ENCODE measurements at regions of chr18 and their contacts with region 1.

Region 1: DNA sequence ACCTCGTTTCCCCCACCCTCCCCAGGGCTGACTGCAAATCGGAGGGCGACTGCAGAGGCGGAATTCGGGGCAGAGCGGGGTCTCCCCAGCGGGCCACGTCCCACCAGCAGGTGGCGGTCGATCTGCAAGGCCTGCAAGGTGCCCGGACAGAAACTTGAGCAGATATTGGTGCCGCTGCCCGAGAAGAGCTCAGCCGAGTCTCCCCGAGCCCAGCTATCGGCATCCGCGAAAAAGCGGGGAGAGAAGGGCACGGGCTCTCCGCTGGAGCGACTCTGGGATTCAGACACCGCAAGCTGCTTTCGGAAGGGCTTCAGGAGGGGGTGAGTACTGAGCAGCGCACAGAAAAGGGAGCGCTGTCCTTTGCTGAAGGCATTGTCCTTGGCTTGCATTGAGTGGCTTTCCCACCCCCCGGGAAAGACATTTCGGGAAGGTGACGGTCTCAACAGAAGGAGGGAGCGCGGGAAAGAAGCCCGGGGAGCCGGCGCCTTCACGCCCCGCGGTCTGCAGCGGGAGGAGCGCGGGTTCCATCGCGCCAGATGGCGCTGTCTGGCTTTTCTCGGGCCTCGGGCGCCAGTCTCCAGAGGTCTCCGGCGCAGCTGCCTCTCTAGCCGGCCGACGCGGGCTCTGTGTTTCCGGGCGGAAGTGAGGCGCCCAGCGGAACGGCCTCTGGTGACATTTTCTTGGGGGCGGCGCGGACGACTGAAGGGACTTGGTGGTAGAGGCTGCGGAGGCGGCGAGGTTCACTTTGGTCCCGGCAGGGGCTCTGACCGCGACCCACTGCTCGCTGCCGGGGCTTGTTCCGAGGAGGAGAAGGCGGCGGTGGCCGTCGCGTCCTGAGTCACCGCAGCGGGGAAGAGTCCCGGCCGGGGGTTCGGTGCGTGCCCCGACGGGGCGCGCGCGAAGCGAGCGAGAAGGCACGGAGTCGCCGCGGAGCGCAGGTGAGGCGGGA is 69.5 kb downstream of the HAUS1 start:
- DNase-seq: peak; percentile 92
- H3K4me3 Mint-ChIP-seq: peak overlapping the region; percentile 84
- H3K27ac Mint-ChIP-seq: peak overlapping the region; percentile 94
- H3K4me1 Mint-ChIP-seq: peaks cover 6% of the 10 kb centered on the region
- H3K27me3 Mint-ChIP-seq: no peaks in the 10 kb centered on the region
- CTCF ChIP-seq: peak; percentile 89

Region 2: DNA sequence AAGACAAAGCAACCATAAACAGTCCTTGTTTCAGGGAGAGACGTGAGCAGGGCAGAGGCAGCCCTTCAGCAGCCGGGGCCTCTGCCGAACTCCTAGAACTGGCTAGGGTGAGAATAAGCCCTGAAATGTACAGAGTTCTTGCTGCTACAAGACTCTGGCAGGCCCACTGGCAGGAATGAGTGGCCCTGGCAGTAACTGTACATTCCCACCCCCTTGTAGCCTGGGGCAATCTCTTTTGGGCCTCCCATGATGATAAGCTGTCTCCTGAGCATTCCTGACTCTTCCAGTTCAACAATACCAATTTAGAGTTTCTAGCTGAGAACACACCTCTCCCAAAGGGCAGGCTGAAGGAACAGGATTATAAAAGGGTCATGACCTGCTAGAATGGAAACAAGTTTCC is 15.2 kb before region 1 on chr18:
- CTCF ChIA-PET with region 1: interaction called, 94 read pairs
- POLR2A ChIA-PET with region 1: interaction called, 12 read pairs
- intact Hi-C with region 1: loop called (anchors 2 kb)
- DNase-seq: peak; percentile 61
- H3K4me3 Mint-ChIP-seq: no peak overlapping the region
- H3K27ac Mint-ChIP-seq: no peak overlapping the region
- H3K4me1 Mint-ChIP-seq: peaks cover 15% of the 10 kb centered on the region
- H3K27me3 Mint-ChIP-seq: no peaks in the 10 kb centered on the region
- CTCF ChIP-seq: no peak

Region 3: DNA sequence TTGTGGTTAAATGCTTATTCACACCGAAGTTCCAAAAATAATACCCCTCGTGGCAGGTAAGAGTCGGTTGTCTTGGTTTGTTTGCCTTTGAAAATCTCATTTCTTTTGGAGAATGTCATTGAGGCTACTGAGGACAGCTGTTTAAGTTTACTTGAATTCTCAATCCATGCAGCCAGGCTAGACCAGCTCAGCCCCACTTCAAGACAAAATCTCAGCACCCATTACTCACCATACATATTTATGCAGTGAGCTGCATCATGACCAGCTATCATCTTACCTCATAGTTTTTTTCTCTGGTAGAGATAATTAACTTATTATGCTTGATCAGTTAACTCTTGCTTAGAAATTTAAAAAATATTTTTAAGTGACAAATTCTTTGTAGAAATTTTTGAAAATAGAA is 46.4 kb after region 1 on chr18:
- CTCF ChIA-PET with region 1: interaction called, 17 read pairs
- POLR2A ChIA-PET with region 1: interaction called, 4 read pairs
- intact Hi-C with region 1: no loop called
- DNase-seq: no peak
- H3K4me3 Mint-ChIP-seq: no peak overlapping the region
- H3K27ac Mint-ChIP-seq: no peak overlapping the region
- H3K4me1 Mint-ChIP-seq: peaks cover 20% of the 10 kb centered on the region
- H3K27me3 Mint-ChIP-seq: no peaks in the 10 kb centered on the region
- CTCF ChIP-seq: no peak

Region 4: GRCh38 chr18:46252759-46253158 is 79.1 kb after region 1 on chr18:
- CTCF ChIA-PET with region 1: interaction called, 13 read pairs
- POLR2A ChIA-PET with region 1: interaction called, 3 read pairs
- intact Hi-C with region 1: no loop called
- DNase-seq: no peak
- H3K4me3 Mint-ChIP-seq: no peak overlapping the region
- H3K27ac Mint-ChIP-seq: no peak overlapping the region
- H3K4me1 Mint-ChIP-seq: peaks cover 38% of the 10 kb centered on the region
- H3K27me3 Mint-ChIP-seq: no peaks in the 10 kb centered on the region
- CTCF ChIP-seq: no peak

Region 5: GRCh38 chr18:46622999-46623398 is 449.3 kb after region 1 on chr18:
- CTCF ChIA-PET with region 1: interaction called, 28 read pairs
- POLR2A ChIA-PET with region 1: interaction called, 3 read pairs
- intact Hi-C with region 1: loop called (anchors 1 kb)
- DNase-seq: peak; percentile 19
- H3K4me3 Mint-ChIP-seq: no peak overlapping the region
- H3K27ac Mint-ChIP-seq: no peak overlapping the region
- H3K4me1 Mint-ChIP-seq: no peaks in the 10 kb centered on the region
- H3K27me3 Mint-ChIP-seq: peaks cover 16% of the 10 kb centered on the region
- CTCF ChIP-seq: peak; percentile 35